ENCODE measurements at regions of chr1 and their contacts with region 1.

Region 1: DNA sequence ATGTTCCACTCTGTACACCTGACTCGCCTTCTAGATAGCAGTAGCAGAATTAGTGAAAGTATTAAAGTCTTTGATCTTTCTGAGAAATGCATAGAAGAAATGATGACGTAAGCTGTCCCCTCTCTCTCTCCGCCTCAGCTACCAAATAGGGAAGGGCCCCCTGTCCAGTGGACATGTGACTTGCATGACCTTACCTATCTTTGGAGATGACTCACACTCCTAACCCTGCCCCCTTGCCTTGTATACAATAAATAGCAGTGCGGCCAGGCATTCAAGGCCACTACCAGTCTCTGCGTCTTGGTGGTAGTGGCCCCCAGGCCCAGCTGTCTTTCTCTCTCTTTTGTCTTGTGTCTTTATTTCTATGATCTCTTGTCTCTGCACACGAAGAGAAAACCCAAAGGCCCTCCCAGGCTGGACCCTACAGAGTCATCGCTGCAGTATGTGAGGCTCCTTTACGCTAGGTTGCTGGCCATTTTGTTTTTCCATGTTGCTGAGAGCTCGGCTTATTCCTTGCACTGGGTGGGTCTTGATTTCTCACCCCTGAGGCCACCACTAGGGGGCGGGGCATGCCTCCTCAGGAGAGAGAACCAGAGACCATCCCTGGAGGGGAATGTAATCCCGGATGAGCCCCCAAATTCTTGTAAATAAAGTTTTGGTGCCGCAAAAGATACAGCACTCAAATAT is 16.0 kb upstream of the ZBTB8B start:
- DNase-seq: peak in 1 of 2 experiments; percentile 7
- H3K4me3 ChIP-seq: no peak overlapping the region
- H3K27ac ChIP-seq: no peak overlapping the region
- H3K4me1 ChIP-seq: no peaks in the 10 kb centered on the region
- H3K27me3 ChIP-seq: peaks cover 24% of the 10 kb centered on the region
- CTCF ChIP-seq: peak; percentile 45

Region 2: GRCh38 chr1:32470431-32470830 is 21.5 kb after region 1 on chr1:
- CTCF ChIA-PET with region 1: interaction called, 12 read pairs
- POLR2A ChIA-PET with region 1: no interaction called
- intact Hi-C with region 1: no loop called
- DNase-seq: no peak
- H3K4me3 ChIP-seq: no peak overlapping the region
- H3K27ac ChIP-seq: no peak overlapping the region
- H3K4me1 ChIP-seq: no peaks in the 10 kb centered on the region
- H3K27me3 ChIP-seq: peaks cover 40% of the 10 kb centered on the region
- CTCF ChIP-seq: no peak

Region 3: DNA sequence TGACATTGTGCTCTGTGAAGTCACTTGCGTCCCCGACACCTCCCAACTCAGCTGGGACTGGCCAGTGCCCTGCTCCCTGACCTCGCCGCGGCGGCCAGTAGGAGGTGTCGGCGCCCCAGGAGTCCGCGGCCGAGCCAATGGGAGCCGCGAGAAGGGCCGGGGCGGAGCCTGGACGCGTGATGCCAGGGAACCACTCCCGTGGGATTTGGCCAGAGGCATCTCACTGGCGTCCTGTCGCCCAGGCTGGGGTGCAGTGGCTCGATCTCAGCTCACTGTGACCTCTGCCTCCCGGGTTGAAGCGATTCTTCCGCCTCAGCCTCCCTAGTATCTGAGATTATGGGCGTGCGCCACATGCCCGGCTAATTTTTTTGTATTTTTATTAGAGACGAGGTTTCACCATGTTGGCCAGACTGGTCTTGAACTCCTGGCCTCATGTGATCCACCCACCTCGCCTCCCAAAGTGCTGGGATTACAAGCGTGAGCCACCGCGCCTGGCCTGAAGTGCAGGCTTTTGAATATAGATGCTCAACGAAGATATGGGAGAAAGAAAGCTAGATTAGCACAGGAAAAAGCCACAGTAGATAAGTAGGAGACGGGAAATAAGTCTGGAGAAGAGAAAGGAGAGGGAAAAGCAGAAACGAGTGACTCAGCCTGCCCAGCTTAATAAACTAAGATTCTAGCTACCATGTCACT is 163.4 kb after region 1 on chr1:
- CTCF ChIA-PET with region 1: no interaction called
- POLR2A ChIA-PET with region 1: no interaction called
- intact Hi-C with region 1: loop called (anchors 10 kb)
- DNase-seq: peak; percentile 83 to 88
- H3K4me3 ChIP-seq: peak overlapping the region; percentile 64
- H3K27ac ChIP-seq: peak overlapping the region; percentile 42
- H3K4me1 ChIP-seq: peaks cover 5% of the 10 kb centered on the region
- H3K27me3 ChIP-seq: no peaks in the 10 kb centered on the region
- CTCF ChIP-seq: peak; percentile 40; the same call in 1 of the 2 replicates

Region 4: DNA sequence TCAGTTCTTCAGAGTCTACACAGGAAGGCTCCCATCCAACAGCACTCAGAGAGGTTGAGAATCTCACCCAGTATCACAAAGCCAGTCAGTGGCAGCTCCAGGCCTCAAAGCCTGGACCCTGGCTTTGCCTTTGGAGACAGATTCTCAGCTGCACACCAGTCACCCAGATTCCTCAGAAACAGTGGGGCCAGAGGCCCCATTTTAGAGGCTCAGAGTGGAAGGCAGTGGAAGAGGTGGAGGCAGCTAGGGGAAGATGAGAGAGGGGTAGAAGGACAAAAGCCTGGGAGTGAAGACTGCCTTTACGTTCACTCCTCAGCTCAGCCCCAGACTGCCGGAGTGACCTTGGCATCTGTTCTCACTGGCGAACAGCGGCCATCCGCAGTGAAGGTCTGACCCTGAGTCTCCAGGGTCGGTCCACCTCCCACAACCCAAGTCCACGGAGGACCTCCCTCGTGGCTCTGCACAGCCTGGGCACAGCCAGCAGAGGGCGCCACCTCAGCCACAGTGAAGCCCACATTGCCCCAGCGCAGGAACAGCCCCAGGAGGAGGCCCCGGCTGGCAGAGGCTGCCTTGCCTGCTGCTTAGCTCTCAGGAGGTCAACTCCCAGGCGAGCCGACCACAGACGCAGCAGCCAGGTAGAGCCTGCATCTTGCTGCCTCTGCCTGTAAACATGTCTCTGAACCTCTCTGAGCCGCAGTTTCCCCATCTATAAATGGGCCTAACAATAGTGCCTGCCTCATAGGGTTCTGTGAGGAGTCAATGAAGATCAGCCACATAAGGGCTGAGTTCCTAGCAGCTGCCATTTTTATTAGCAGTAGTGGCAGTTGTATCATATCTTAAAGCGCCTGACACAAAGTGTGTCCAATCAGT is 427.7 kb after region 1 on chr1:
- CTCF ChIA-PET with region 1: no interaction called
- POLR2A ChIA-PET with region 1: no interaction called
- intact Hi-C with region 1: loop called (anchors 10 kb)
- DNase-seq: peak in 1 of 2 experiments; percentile 61
- H3K4me3 ChIP-seq: no peak overlapping the region
- H3K27ac ChIP-seq: no peak overlapping the region
- H3K4me1 ChIP-seq: no peaks in the 10 kb centered on the region
- H3K27me3 ChIP-seq: peaks cover 6% of the 10 kb centered on the region; the same call in 1 of the 2 replicates
- CTCF ChIP-seq: peak; percentile 91

Region 5: GRCh38 chr1:32919811-32920733 is 471.2 kb after region 1 on chr1:
- CTCF ChIA-PET with region 1: no interaction called
- POLR2A ChIA-PET with region 1: interaction called, 14 read pairs
- intact Hi-C with region 1: no loop called
- DNase-seq: no peak
- H3K4me3 ChIP-seq: no peak overlapping the region
- H3K27ac ChIP-seq: no peak overlapping the region
- H3K4me1 ChIP-seq: peaks cover 8% of the 10 kb centered on the region; the same call in 1 of the 2 replicates
- H3K27me3 ChIP-seq: no peaks in the 10 kb centered on the region
- CTCF ChIP-seq: no peak

Region 6: GRCh38 chr1:33086384-33086850 is 637.5 kb after region 1 on chr1:
- CTCF ChIA-PET with region 1: no interaction called
- POLR2A ChIA-PET with region 1: no interaction called
- intact Hi-C with region 1: loop called (anchors 5 kb)
- DNase-seq: peak; percentile 57 to 67
- H3K4me3 ChIP-seq: no peak overlapping the region
- H3K27ac ChIP-seq: no peak overlapping the region
- H3K4me1 ChIP-seq: peaks cover 8% of the 10 kb centered on the region
- H3K27me3 ChIP-seq: no peaks in the 10 kb centered on the region
- CTCF ChIP-seq: peak; percentile 82